H1 (cell line): ENCODE measurements at regions of chr1 and their contacts with region 1.

Region 1: GRCh38 chr1:47424336-47424982 is 8.4 kb downstream of the FOXE3 start:
- DNase-seq: peak in 1 of 2 experiments; percentile 69
- H3K4me3 ChIP-seq: no peak overlapping the region
- H3K27ac ChIP-seq: no peak overlapping the region
- H3K4me1 ChIP-seq: peaks cover 0 to 3% (median 2%) of the 10 kb centered on the region in 4 experiments; a peak in 2 of 7 replicates
- H3K27me3 ChIP-seq: peaks cover 11 to 53% (median 39%) of the 10 kb centered on the region in 4 experiments
- CTCF ChIP-seq: peak; percentile 72 to 98 (median 95)
- EP300 ChIP-seq: no peak
- POLR2A ChIP-seq: no peak
- RAD21 ChIP-seq: peak; percentile 62 to 71

Region 2: GRCh38 chr1:47399138-47399845 is 25.2 kb before region 1 on chr1:
- CTCF ChIA-PET with region 1: interaction called, 14 read pairs
- POLR2A ChIA-PET with region 1: no interaction called
- DNase-seq: no peak
- H3K4me3 ChIP-seq: no peak overlapping the region
- H3K27ac ChIP-seq: no peak overlapping the region
- H3K4me1 ChIP-seq: no peaks in the 10 kb centered on the region
- H3K27me3 ChIP-seq: peaks cover 0 to 4% (median 0%) of the 10 kb centered on the region in 4 experiments; a peak in 3 of 7 replicates
- CTCF ChIP-seq: no peak
- EP300 ChIP-seq: no peak
- POLR2A ChIP-seq: no peak
- RAD21 ChIP-seq: no peak

Region 3: GRCh38 chr1:47409311-47410070 is 15.0 kb before region 1 on chr1:
- CTCF ChIA-PET with region 1: interaction called, 18 read pairs
- POLR2A ChIA-PET with region 1: no interaction called
- DNase-seq: no peak
- H3K4me3 ChIP-seq: no peak overlapping the region
- H3K27ac ChIP-seq: no peak overlapping the region
- H3K4me1 ChIP-seq: no peaks in the 10 kb centered on the region; a peak in 1 of 7 replicates
- H3K27me3 ChIP-seq: peaks cover 0 to 16% (median 12%) of the 10 kb centered on the region in 4 experiments; a peak in 6 of 7 replicates
- CTCF ChIP-seq: no peak
- EP300 ChIP-seq: no peak
- POLR2A ChIP-seq: no peak
- RAD21 ChIP-seq: no peak

Region 4: DNA sequence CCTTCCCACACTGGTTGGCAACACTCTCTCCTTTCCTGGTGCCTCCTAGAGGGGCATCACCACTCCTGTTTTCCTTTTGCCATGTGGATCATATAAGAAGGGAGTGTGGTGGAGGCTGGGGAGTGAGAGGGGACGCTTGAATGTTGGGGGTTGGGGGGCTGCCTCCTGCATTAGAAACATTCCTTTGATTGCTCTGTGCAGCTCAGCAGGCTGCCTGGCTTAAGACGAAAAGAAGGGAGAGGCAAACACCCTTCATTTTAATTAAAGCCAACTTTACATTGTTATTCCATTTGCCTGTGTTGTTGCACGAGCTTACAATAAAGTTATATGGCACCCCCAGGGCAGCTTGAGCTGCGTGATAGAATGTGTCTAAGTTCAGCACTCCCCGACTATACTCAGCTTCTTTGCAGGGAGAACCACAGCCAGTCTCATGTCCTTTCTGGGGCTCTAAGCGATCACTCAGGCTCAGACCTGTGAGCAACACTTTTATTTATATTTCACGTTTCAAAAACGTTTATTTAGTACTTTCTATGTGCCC is 70.8 kb after region 1 on chr1:
- CTCF ChIA-PET with region 1: no interaction called
- POLR2A ChIA-PET with region 1: no interaction called
- DNase-seq: no peak
- H3K4me3 ChIP-seq: no peak overlapping the region
- H3K27ac ChIP-seq: no peak overlapping the region
- H3K4me1 ChIP-seq: peaks cover 0 to 6% (median 4%) of the 10 kb centered on the region in 4 experiments; a peak in 4 of 7 replicates
- H3K27me3 ChIP-seq: peaks cover 0 to 9% (median 6%) of the 10 kb centered on the region in 4 experiments; a peak in 5 of 7 replicates
- CTCF ChIP-seq: no peak
- EP300 ChIP-seq: no peak
- POLR2A ChIP-seq: no peak
- RAD21 ChIP-seq: no peak